HCT116 (cell line): ENCODE measurements at regions of chr1 and their contacts with region 1.

Region 1: GRCh38 chr1:59769736-59770095 is 45.0 kb upstream of the HOOK1 start:
- DNase-seq: no peak
- ATAC-seq: no peak
- H3K4me3 ChIP-seq: no peak overlapping the region
- H3K27ac ChIP-seq: no peak overlapping the region
- H3K4me1 ChIP-seq: no peaks in the 10 kb centered on the region
- H3K27me3 ChIP-seq: no peaks in the 10 kb centered on the region
- CTCF ChIP-seq: no peak
- POLR2A ChIP-seq: no peak
- RAD21 ChIP-seq: no peak

Region 2: DNA sequence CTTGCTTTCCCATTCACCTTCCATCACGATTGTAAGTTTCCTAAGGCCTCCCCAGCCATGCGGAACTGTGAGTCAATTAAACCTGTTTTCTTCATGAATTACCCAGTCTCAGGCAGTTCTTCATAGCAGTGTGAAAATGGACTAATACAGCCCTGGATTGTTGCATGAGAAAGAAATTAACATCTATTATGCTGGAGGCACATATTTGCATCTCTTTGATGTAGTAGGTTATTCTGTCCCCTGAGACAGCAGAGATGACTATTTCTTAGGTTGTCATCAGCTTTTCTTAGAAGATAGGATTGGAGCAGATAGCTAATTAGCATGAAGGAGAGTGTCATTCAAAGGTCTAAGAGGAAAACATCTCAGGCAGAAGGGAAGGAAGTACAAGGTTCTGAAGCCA is 1389.4 kb before region 1 on chr1:
- CTCF ChIA-PET with region 1: no interaction called
- POLR2A ChIA-PET with region 1: no interaction called
- RAD21 ChIA-PET with region 1: no interaction called
- intact Hi-C with region 1: loop called (anchors 5 kb)
- DNase-seq: no peak
- ATAC-seq: no peak
- H3K4me3 ChIP-seq: no peak overlapping the region
- H3K27ac ChIP-seq: no peak overlapping the region
- H3K4me1 ChIP-seq: no peaks in the 10 kb centered on the region
- H3K27me3 ChIP-seq: peaks cover 21% of the 10 kb centered on the region
- CTCF ChIP-seq: no peak
- POLR2A ChIP-seq: no peak
- RAD21 ChIP-seq: no peak